RWPE1 (cell line): ENCODE measurements at regions of chr7 and their contacts with region 1.

Region 1: DNA sequence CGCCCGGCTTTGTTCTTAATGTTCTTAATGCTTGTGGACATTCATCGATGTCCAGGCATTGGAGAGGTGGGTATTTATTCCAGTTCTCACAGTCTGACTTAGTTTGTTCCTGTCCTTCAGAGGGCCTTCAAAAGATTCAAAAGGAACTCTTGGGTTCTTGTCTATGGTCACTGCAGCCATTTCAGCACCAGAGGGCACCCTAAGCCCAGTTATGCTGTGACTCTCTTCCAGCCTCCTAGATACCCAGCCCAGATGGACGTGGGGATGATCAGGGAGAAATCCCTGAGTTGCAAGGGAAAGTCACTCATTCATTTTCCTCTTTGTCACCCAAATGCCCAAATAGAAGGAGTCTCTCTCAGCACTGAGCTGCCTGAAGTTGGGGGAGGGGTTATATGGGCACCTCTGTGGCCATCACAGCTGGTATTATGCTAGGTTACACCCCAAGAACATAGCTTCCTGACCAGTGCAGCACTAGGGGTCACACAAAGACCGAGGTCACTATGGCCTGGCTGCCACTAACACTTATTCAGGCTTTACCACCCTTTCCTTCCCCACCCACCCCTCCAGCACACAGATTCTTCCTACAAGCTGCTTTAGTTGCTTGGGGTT is 26.5 kb upstream of the CCDC126 start:
- DNase-seq: peak; percentile 83
- H3K27ac ChIP-seq: no peak overlapping the region
- CTCF ChIP-seq: peak; percentile 90

Region 2: GRCh38 chr7:23494009-23494408 is 76.7 kb before region 1 on chr7:
- CTCF ChIA-PET with region 1: no interaction called
- POLR2A ChIA-PET with region 1: no interaction called
- DNase-seq: no peak
- H3K27ac ChIP-seq: peak overlapping the region; percentile 28
- CTCF ChIP-seq: no peak

Region 3: GRCh38 chr7:23712368-23713284 is 141.9 kb after region 1 on chr7:
- CTCF ChIA-PET with region 1: interaction called, 14 read pairs
- POLR2A ChIA-PET with region 1: no interaction called
- DNase-seq: peak; percentile 67
- H3K27ac ChIP-seq: no peak overlapping the region
- CTCF ChIP-seq: peak; percentile 55